Activated naive CD4-positive, alpha-beta T cell treated with anti-CD3 and anti-CD28 coated beads, Interleukin-2, amount 10 ng/mL, durations not matched to agents 7 days and 5 days (primary cell): ENCODE measurements at regions of chr4 and their contacts with region 1.

Region 1: GRCh38 chr4:169810325-169811323 is 52.9 kb upstream of the HPF1 start:
- DNase-seq: peak; percentile 24
- H3K4me3 Mint-ChIP-seq: no peak overlapping the region
- H3K27ac Mint-ChIP-seq: no peak overlapping the region
- H3K4me1 Mint-ChIP-seq: no peaks in the 10 kb centered on the region
- H3K27me3 Mint-ChIP-seq: peaks cover 9% of the 10 kb centered on the region

Region 2: GRCh38 chr4:169612871-169613859 is 197.5 kb before region 1 on chr4:
- CTCF ChIA-PET with region 1: interaction called, 10 read pairs
- DNase-seq: peak; percentile 82
- H3K4me3 Mint-ChIP-seq: peak overlapping the region; percentile 89
- H3K27ac Mint-ChIP-seq: peak overlapping the region; percentile 97
- H3K4me1 Mint-ChIP-seq: peaks cover 52% of the 10 kb centered on the region
- H3K27me3 Mint-ChIP-seq: no peaks in the 10 kb centered on the region

Region 3: GRCh38 chr4:169800541-169800940 is 10.1 kb before region 1 on chr4:
- CTCF ChIA-PET with region 1: interaction called, 14 read pairs
- DNase-seq: no peak
- H3K4me3 Mint-ChIP-seq: no peak overlapping the region
- H3K27ac Mint-ChIP-seq: no peak overlapping the region
- H3K4me1 Mint-ChIP-seq: no peaks in the 10 kb centered on the region
- H3K27me3 Mint-ChIP-seq: peaks cover 9% of the 10 kb centered on the region

Region 4: DNA sequence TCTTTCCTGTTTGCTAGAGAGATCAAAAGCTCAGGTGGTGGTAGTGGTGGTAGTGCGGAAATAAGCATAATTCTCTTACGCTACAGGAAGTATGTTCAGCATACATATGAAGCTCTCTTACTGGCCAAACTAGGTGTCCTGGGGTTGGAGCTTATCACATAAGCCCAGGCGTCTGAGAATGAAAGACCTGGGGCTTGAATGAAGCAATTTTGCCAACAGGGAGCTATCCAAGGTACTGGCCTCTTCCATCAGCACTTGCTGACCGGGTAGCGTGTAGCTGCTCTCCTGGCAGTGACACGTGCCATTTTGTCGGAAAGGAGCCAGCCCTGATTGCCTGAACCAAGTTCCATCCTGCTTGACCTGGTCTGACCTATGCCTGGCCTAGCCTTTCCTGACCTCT is 13.1 kb after region 1 on chr4:
- CTCF ChIA-PET with region 1: interaction called, 11 read pairs
- DNase-seq: peak; percentile 53
- H3K4me3 Mint-ChIP-seq: no peak overlapping the region
- H3K27ac Mint-ChIP-seq: no peak overlapping the region
- H3K4me1 Mint-ChIP-seq: peaks cover 11% of the 10 kb centered on the region
- H3K27me3 Mint-ChIP-seq: peaks cover 2% of the 10 kb centered on the region

Region 5: GRCh38 chr4:169952236-169953002 is 141.8 kb after region 1 on chr4:
- CTCF ChIA-PET with region 1: no interaction called
- DNase-seq: no peak
- H3K4me3 Mint-ChIP-seq: no peak overlapping the region
- H3K27ac Mint-ChIP-seq: no peak overlapping the region
- H3K4me1 Mint-ChIP-seq: no peaks in the 10 kb centered on the region
- H3K27me3 Mint-ChIP-seq: no peaks in the 10 kb centered on the region

Region 6: GRCh38 chr4:170047771-170048354 is 237.2 kb after region 1 on chr4:
- CTCF ChIA-PET with region 1: interaction called, 40 read pairs
- DNase-seq: peak; percentile 72
- H3K4me3 Mint-ChIP-seq: no peak overlapping the region
- H3K27ac Mint-ChIP-seq: no peak overlapping the region
- H3K4me1 Mint-ChIP-seq: no peaks in the 10 kb centered on the region
- H3K27me3 Mint-ChIP-seq: peaks cover 4% of the 10 kb centered on the region